PC-3 (cell line): ENCODE measurements at regions of chr7 and their contacts with region 1.

Region 1: DNA sequence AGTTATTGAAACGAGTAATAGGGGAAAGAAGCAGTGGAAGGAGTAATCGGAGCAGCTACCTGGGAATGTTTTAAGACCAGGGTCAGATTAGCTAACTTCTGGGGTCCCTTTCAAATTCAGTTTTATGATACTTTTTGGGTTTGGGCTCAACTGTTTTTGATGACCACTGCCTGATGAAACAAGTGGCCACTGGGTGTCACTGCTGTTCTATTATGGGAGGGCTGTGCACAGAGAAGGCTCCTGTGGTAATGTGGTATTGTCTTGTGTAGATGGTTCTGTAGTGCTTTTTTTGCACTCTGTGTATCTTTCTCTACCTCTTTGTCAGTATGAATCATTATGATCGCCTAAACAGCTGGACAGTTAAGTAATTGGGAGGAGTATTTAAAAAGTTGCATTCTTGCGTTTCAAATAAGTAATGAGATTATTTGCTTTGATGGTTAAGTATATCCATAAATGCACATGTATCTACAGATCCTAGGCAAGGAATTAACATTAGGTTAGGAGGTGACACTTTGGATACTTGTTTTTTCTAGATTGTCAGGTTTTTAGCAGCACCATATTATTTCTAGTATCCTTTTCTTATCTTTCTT is 128.4 kb downstream of the ABCA13 start:
- DNase-seq: peak; percentile 88
- ATAC-seq: peak; percentile 93
- H3K4me3 ChIP-seq: no peak overlapping the region
- H3K27ac ChIP-seq: peak overlapping the region; percentile 94
- H3K4me1 ChIP-seq: peaks cover 24% of the 10 kb centered on the region
- H3K27me3 ChIP-seq: no peaks in the 10 kb centered on the region
- CTCF ChIP-seq: peak; percentile 88

Region 2: DNA sequence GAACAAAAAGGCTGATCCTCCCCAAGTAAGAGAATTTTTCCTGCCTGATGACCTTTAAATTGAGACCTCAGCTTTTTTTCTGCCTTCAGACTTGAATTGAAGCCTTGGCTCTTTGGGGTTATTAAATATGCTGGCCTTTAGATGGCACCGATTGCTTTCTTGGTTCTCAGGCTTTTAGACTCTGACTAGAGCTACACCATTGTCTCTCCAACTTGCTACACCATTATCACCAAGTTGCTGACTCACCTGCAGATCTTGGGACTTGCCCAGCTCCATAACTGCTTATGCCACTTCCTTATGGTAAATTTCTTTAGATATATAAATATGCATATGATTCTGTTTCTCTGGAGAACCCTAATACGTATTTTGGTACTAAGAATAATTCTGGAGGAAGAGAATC is 131.5 kb before region 1 on chr7:
- CTCF ChIA-PET with region 1: interaction called, 15 read pairs
- POLR2A ChIA-PET with region 1: no interaction called
- intact Hi-C with region 1: loop called (anchors 1 kb)
- DNase-seq: peak; percentile 67
- ATAC-seq: peak; percentile 94
- H3K4me3 ChIP-seq: no peak overlapping the region
- H3K27ac ChIP-seq: no peak overlapping the region
- H3K4me1 ChIP-seq: peaks cover 4% of the 10 kb centered on the region
- H3K27me3 ChIP-seq: no peaks in the 10 kb centered on the region
- CTCF ChIP-seq: peak; percentile 44

Region 3: GRCh38 chr7:48213226-48213625 is 86.4 kb before region 1 on chr7:
- CTCF ChIA-PET with region 1: no interaction called
- POLR2A ChIA-PET with region 1: no interaction called
- intact Hi-C with region 1: loop called (anchors 1 kb)
- DNase-seq: peak; percentile 82
- ATAC-seq: peak; percentile 95
- H3K4me3 ChIP-seq: no peak overlapping the region
- H3K27ac ChIP-seq: peak overlapping the region; percentile 69
- H3K4me1 ChIP-seq: peaks cover 26% of the 10 kb centered on the region
- H3K27me3 ChIP-seq: no peaks in the 10 kb centered on the region
- CTCF ChIP-seq: no peak

Region 4: DNA sequence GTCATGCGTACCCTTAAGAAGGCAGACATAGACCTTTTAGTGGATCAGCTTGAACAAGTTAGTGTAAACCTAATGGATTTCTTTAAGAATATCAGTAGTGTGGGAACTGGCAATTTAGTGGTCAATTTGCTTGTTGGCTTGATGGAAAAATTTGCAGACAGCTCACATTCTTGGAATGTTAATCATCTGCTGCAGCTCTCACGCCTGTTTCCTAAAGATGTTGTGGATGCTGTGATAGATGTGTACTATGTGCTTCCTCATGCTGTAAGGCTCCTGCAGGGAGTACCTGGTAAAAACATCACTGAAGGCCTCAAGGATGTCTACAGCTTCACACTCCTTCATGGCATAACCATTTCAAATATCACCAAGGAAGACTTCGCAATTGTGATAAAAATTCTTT is 25.0 kb before region 1 on chr7:
- CTCF ChIA-PET with region 1: no interaction called
- POLR2A ChIA-PET with region 1: no interaction called
- intact Hi-C with region 1: loop called (anchors 2 kb)
- DNase-seq: peak; percentile 22
- ATAC-seq: peak; percentile 63
- H3K4me3 ChIP-seq: no peak overlapping the region
- H3K27ac ChIP-seq: no peak overlapping the region
- H3K4me1 ChIP-seq: peaks cover 24% of the 10 kb centered on the region
- H3K27me3 ChIP-seq: no peaks in the 10 kb centered on the region
- CTCF ChIP-seq: no peak

Region 5: DNA sequence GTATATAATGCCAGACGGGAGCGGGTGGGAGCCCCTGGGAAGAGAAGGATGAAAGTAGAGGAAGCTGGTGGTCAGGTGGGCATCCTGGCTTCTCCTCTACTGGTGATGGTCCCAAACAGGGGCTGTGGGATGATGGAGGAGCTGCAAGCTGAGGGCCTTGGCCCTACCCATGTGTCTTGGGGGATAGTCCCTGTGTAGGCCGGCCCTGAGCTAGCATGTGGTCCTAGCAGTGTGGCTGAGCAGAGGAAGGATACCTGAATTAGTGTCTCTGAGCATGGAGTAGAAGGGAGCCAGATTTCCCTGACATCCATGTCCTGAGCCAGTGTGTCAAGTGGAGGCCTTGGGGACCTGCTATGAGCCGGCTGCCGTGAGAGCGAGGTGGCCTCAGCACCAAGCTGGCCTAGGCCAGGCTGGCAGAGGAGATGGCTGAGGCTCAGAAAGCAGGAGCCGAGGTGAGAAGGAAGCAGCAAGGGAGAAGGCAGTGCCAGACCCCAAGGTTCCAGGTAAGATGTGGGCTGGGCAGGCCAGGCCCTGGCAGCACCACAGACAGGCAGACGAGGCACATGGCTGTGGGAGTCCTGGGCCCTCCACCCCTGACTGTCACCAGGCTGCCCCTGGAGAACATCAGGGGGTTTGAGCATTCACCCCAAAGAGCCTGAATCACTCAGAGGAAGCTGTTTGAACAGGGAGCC is 21.8 kb after region 1 on chr7:
- CTCF ChIA-PET with region 1: no interaction called
- POLR2A ChIA-PET with region 1: no interaction called
- intact Hi-C with region 1: no loop called
- DNase-seq: no peak
- ATAC-seq: no peak
- H3K4me3 ChIP-seq: no peak overlapping the region
- H3K27ac ChIP-seq: no peak overlapping the region
- H3K4me1 ChIP-seq: no peaks in the 10 kb centered on the region
- H3K27me3 ChIP-seq: no peaks in the 10 kb centered on the region
- CTCF ChIP-seq: no peak

Region 6: GRCh38 chr7:48424731-48425130 is 125.1 kb after region 1 on chr7:
- CTCF ChIA-PET with region 1: interaction called, 4 read pairs
- POLR2A ChIA-PET with region 1: no interaction called
- intact Hi-C with region 1: loop called (anchors 1 kb)
- DNase-seq: peak; percentile 75
- ATAC-seq: no peak
- H3K4me3 ChIP-seq: no peak overlapping the region
- H3K27ac ChIP-seq: no peak overlapping the region
- H3K4me1 ChIP-seq: peaks cover 58% of the 10 kb centered on the region
- H3K27me3 ChIP-seq: no peaks in the 10 kb centered on the region
- CTCF ChIP-seq: peak; percentile 92

Region 7: DNA sequence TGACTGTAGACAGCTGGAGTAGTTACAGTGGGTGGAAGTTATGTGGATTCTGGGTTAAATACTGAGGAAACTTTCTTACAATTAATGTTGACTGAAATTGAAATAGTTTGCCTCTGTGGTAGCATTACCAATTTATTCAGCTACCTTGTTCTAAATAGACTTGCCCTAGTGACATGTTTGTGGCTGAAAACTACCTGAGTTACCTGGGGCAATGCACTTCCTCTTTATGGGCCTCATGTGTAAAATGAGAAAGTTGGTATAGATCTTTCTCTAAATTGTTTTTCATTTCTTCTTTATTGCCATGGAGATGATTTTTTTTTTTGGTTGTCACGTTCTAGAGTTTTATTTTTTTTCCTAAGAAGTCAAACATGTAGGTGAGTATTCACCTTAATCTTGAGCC is 372.0 kb after region 1 on chr7:
- CTCF ChIA-PET with region 1: no interaction called
- POLR2A ChIA-PET with region 1: no interaction called
- intact Hi-C with region 1: no loop called
- DNase-seq: no peak
- ATAC-seq: no peak
- H3K4me3 ChIP-seq: no peak overlapping the region
- H3K27ac ChIP-seq: no peak overlapping the region
- H3K4me1 ChIP-seq: no peaks in the 10 kb centered on the region
- H3K27me3 ChIP-seq: no peaks in the 10 kb centered on the region
- CTCF ChIP-seq: no peak

Region 8: DNA sequence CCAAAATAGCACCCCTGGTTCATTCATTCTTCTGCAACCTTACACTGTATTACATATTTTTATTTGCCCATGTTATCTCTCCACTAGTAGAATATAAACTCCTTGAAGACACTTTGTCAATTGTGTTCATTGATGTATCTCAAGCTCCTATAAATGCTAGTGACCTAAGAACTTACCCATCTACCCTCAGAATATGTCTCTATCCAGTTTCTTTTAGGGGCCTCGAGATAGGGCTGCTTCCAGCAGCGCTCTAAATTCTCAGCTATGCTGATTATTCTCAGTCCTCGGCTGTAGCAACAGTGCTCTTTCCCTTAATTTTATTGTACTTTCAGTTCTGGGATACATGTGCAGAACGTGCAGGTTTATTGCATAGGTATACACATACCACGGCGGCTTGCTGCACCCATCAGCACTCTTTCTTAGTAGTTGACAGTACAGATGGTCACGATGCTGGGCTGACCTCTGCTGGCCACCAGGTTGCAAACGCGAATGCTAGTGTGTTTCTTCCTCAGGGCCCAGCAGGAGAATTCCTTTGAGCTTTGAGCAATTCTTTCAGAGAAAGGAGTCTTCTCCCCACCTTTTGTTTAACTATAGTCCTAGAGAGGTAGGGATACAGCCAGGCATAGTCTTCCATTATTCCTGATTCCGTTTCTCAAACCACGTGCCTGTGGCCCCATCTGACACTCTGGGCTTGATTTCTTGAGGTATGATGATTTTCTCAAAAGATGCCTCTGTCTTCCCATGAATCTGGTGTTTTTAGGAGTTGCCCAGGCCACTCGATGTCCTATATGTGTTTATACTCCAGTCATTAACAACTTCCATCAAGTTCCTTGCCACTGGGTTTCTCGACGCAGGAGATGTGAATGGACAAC is 575.6 kb after region 1 on chr7:
- CTCF ChIA-PET with region 1: interaction called, 5 read pairs
- POLR2A ChIA-PET with region 1: no interaction called
- intact Hi-C with region 1: loop called (anchors 1 kb)
- DNase-seq: peak; percentile 72
- ATAC-seq: peak; percentile 100
- H3K4me3 ChIP-seq: peak overlapping the region; percentile 34; the same call in 1 of the 2 replicates
- H3K27ac ChIP-seq: no peak overlapping the region
- H3K4me1 ChIP-seq: no peaks in the 10 kb centered on the region
- H3K27me3 ChIP-seq: no peaks in the 10 kb centered on the region
- CTCF ChIP-seq: peak; percentile 80

Region 9: DNA sequence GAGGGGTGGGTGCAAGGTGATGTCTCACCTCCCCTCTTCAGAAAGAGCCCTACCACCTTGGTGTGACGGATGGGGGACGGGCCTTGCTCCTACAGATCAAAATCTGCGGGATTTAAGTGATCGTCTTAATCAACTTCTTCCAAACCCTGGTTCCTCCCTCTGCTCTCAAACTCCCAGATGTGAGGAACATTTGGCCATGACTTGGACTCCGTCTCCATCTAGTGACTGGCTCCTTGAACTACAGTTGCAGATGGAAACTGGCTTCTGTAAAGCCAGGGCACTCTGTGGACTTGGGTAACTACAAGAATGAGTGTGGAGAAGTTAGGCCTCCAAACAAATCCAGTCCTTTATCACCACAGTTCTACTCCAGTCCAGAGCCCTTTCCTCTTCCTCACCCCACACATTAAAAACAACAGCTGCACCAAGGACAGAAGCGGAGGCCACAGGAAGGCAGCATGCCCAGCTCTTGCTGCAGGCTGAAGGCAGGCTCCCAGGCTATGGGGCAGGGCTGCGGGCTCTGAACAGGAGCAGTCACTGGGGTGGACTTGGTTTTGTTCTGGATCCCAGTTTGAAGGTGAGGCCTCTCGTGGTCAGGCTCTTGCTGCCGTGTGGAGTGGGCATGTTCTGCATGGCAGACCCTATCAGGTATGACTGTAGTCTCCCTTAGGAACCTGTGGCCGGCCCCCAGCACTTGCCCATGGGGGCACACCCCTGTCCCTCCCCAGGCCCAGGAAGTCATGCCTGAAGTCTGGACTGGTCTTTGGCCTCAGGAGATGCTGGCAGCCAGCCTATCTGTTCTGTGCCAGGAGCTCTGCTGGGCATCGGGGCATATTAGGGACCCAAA is 1553.2 kb after region 1 on chr7:
- CTCF ChIA-PET with region 1: no interaction called
- POLR2A ChIA-PET with region 1: no interaction called
- intact Hi-C with region 1: loop called (anchors 2 kb)
- DNase-seq: peak; percentile 74
- ATAC-seq: peak; percentile 80
- H3K4me3 ChIP-seq: no peak overlapping the region
- H3K27ac ChIP-seq: no peak overlapping the region
- H3K4me1 ChIP-seq: no peaks in the 10 kb centered on the region
- H3K27me3 ChIP-seq: peaks cover 16% of the 10 kb centered on the region
- CTCF ChIP-seq: peak; percentile 85